ENCODE measurements at regions of chr3 and their contacts with region 1.

Region 1: GRCh38 chr3:127455541-127456450 is 134.7 kb downstream of the TPRA1 start:
- DNase-seq: no peak
- ATAC-seq: peak; percentile 99
- H3K4me3 ChIP-seq: no peak overlapping the region
- H3K27ac ChIP-seq: no peak overlapping the region
- H3K4me1 ChIP-seq: no peaks in the 10 kb centered on the region
- H3K27me3 ChIP-seq: peaks cover 12 to 16% of the 10 kb centered on the region in 2 experiments
- CTCF ChIP-seq: peak; percentile 62 to 81 (median 80); a peak in 5 of 6 replicates
- EP300 ChIP-seq: no peak
- POLR2A ChIP-seq: no peak
- RAD21 ChIP-seq: peak; percentile 89

Region 2: GRCh38 chr3:126522363-126522788 is 933.4 kb before region 1 on chr3:
- CTCF ChIA-PET with region 1: interaction called, 4 read pairs
- POLR2A ChIA-PET with region 1: no interaction called
- RAD21 ChIA-PET with region 1: interaction called, 4 read pairs
- SMC1A ChIA-PET with region 1: no interaction called
- in situ Hi-C with region 1: no loop called
- intact Hi-C with region 1: loop called (anchors 1 kb)
- DNase-seq: no peak
- ATAC-seq: peak; percentile 72
- H3K4me3 ChIP-seq: no peak overlapping the region
- H3K27ac ChIP-seq: no peak overlapping the region
- H3K4me1 ChIP-seq: no peaks in the 10 kb centered on the region
- H3K27me3 ChIP-seq: no peaks in the 10 kb centered on the region; a peak in 1 of 4 replicates
- CTCF ChIP-seq: peak; percentile 72 to 89 (median 87)
- EP300 ChIP-seq: no peak
- POLR2A ChIP-seq: no peak
- RAD21 ChIP-seq: peak; percentile 62

Region 3: GRCh38 chr3:126679318-126679751 is 776.5 kb before region 1 on chr3:
- CTCF ChIA-PET with region 1: interaction called, 11 read pairs
- POLR2A ChIA-PET with region 1: no interaction called
- RAD21 ChIA-PET with region 1: interaction called, 8 read pairs
- SMC1A ChIA-PET with region 1: interaction called, 4 read pairs
- in situ Hi-C with region 1: loop called (anchors 5 kb)
- intact Hi-C with region 1: loop called (anchors 1 kb)
- DNase-seq: peak; percentile 4
- ATAC-seq: peak; percentile 98
- H3K4me3 ChIP-seq: no peak overlapping the region
- H3K27ac ChIP-seq: no peak overlapping the region
- H3K4me1 ChIP-seq: 0 out of 2 replicates have a peak, but pooled peaks cover 3% of the 10 kb centered on the region
- H3K27me3 ChIP-seq: peaks cover 0 to 2% of the 10 kb centered on the region in 2 experiments; a peak in 2 of 4 replicates
- CTCF ChIP-seq: peak; percentile 89 to 98 (median 94)
- EP300 ChIP-seq: no peak
- POLR2A ChIP-seq: no peak
- RAD21 ChIP-seq: peak; percentile 82

Region 4: DNA sequence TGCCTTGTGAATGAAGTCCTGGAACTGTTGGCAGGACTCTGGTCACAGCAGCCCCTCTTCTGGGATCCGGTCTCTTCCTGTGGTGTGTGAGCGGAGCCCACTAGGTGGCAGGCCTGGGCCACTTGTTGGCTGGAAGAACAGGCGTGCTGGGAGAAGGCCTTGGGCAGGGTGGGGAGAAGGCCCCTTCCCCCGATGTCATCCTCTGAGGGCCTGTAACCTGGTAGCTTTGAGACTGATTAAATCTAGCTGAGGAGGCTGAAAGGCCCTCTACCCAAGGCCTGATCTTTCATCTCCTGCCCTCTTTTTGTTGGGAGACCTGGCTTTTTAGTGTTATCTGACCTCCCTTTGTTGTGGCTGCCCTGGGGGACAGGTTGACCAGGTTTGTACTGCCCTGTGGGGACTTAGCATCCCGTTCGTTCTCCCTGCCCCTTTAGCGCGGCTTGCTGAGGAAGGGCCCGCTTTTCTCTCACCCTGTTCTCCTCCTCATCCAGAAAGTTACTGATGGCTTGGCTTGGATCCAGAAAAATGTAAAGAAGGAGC is 703.4 kb before region 1 on chr3:
- CTCF ChIA-PET with region 1: interaction called, 65 read pairs
- POLR2A ChIA-PET with region 1: no interaction called
- RAD21 ChIA-PET with region 1: interaction called, 10 read pairs
- SMC1A ChIA-PET with region 1: interaction called, 14 read pairs
- in situ Hi-C with region 1: loop called (anchors 5 kb)
- intact Hi-C with region 1: loop called (anchors 1 kb)
- DNase-seq: peak; percentile 30
- ATAC-seq: peak; percentile 100
- H3K4me3 ChIP-seq: no peak overlapping the region
- H3K27ac ChIP-seq: no peak overlapping the region
- H3K4me1 ChIP-seq: no peaks in the 10 kb centered on the region
- H3K27me3 ChIP-seq: no peaks in the 10 kb centered on the region
- CTCF ChIP-seq: peak; percentile 93 to 95 (median 95)
- EP300 ChIP-seq: no peak
- POLR2A ChIP-seq: no peak
- RAD21 ChIP-seq: peak; percentile 99

Region 5: DNA sequence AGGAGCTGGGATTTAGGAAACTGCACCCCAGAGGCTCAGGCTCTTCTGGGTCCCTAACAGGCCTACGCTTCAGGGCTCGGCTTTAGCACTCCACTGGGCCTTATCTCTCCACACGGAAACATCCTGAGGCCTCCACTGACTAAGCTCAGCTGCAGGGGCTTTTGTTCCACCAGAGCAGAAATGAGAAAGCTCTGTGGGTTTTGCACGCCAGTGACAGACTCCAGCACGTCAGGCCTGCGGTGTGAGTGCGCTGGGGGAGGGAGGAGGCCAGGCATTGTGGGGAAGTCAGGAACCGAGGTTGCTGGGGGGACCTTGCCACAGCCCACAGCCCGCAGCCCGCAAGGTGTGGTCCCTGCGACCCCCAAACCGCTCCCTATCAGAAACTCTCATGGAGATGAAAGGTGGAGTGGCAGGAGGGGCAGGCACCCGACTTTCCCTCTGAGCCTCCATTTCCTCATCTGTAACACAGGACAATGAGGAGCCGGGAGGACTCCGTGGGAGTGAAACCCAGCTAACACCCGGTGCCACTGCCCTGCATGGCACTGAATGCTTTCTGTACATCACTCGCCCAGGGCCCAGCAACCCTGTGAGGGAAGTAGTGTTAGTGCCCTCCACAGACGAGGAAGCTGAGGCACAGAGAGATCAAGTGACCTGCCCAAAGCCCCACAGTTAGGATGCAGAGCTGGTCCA is 28.3 kb after region 1 on chr3:
- CTCF ChIA-PET with region 1: no interaction called
- POLR2A ChIA-PET with region 1: no interaction called
- RAD21 ChIA-PET with region 1: no interaction called
- SMC1A ChIA-PET with region 1: no interaction called
- in situ Hi-C with region 1: no loop called
- intact Hi-C with region 1: no loop called
- DNase-seq: peak; percentile 38
- ATAC-seq: peak; percentile 92
- H3K4me3 ChIP-seq: no peak overlapping the region
- H3K27ac ChIP-seq: no peak overlapping the region
- H3K4me1 ChIP-seq: peaks cover 23% of the 10 kb centered on the region
- H3K27me3 ChIP-seq: no peaks in the 10 kb centered on the region; a peak in 1 of 4 replicates
- CTCF ChIP-seq: no peak
- EP300 ChIP-seq: peak; percentile 88 to 91
- POLR2A ChIP-seq: no peak
- RAD21 ChIP-seq: no peak